Aorta (tissue), 5 donors: ENCODE measurements at regions of chr6 and their contacts with region 1.

Region 1: DNA sequence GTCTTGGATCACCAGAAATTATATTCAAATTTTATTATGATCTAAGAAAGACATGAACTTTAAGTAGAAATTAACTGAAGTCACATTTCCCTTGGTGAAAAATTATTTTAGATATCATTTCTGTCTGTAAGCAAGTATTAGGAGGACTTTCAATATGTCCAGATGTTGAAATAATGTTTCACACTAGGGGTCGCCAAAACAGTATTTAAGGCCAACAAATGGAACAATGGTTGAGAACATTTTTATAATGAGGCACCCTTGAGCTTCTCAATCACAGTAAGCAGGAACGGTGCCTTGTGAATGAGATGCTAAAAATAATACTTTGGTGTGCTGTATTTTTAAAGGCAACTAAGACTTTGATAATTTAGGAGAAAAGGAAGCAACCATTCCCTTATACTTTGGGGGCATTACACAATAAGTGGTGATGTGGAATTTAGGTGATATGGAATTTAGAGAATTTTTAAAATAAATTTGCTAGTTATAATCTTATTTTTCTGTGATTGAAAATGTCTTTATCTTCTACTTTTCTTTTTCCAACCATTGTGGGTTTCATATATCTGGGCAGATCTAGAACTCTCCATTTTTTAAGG is 9.6 kb upstream of the SF3B5 start:
- DNase-seq: no peak
- ATAC-seq: peak; percentile 85
- H3K4me3 ChIP-seq: no peak overlapping the region
- H3K27ac ChIP-seq: no peak overlapping the region
- H3K4me1 ChIP-seq: no peaks in the 10 kb centered on the region
- H3K27me3 ChIP-seq: no peaks in the 10 kb centered on the region

Region 2: GRCh38 chr6:144215932-144216667 is 111.1 kb after region 1 on chr6:
- intact Hi-C with region 1: loop called (anchors 1 to 2 kb)
- DNase-seq: peak; percentile 95 to 97
- ATAC-seq: peak; percentile 97
- H3K4me3 ChIP-seq: peak overlapping the region; percentile 48 to 87
- H3K27ac ChIP-seq: peak overlapping the region; percentile 31 to 87
- H3K4me1 ChIP-seq: no peaks in the 10 kb centered on the region
- H3K27me3 ChIP-seq: no peaks in the 10 kb centered on the region